ENCODE measurements at regions of chr13 and their contacts with region 1.

Region 1: DNA sequence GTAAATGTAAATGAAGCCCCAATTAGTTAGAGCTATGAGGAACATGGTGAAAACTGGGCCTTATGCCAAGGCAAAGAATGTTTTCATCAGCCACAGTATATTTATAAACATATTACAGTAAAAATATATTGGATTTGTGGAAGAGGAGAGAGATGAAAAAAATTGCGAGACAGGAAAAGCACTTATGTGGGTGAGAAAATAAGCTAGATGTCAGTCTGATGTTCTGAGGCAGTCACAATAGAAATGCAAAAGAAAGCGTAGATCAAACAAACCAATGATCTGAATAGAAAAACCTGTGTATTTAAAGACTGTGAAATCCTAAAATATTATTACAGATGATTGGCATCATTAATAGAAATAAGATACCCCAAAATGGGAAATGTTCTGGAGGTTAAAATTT is 1332.5 kb downstream of the SLITRK5 start:
- DNase-seq: no peak
- H3K4me3 ChIP-seq: no peak overlapping the region
- H3K27ac ChIP-seq: no peak overlapping the region
- H3K4me1 ChIP-seq: no peaks in the 10 kb centered on the region
- H3K27me3 ChIP-seq: no peaks in the 10 kb centered on the region
- CTCF ChIP-seq: no peak
- POLR2A ChIP-seq: no peak

Region 2: GRCh38 chr13:89239361-89240127 is 235.9 kb after region 1 on chr13:
- intact Hi-C with region 1: loop called (anchors 5 kb)
- DNase-seq: no peak
- H3K4me3 ChIP-seq: no peak overlapping the region
- H3K27ac ChIP-seq: no peak overlapping the region
- H3K4me1 ChIP-seq: no peaks in the 10 kb centered on the region
- H3K27me3 ChIP-seq: no peaks in the 10 kb centered on the region
- CTCF ChIP-seq: no peak
- POLR2A ChIP-seq: no peak

Measured in breast epithelium (tissue), 4 donors.